Ascending aorta (tissue), 2 donors: ENCODE measurements at regions of chr12 and their contacts with region 1.

Region 1: DNA sequence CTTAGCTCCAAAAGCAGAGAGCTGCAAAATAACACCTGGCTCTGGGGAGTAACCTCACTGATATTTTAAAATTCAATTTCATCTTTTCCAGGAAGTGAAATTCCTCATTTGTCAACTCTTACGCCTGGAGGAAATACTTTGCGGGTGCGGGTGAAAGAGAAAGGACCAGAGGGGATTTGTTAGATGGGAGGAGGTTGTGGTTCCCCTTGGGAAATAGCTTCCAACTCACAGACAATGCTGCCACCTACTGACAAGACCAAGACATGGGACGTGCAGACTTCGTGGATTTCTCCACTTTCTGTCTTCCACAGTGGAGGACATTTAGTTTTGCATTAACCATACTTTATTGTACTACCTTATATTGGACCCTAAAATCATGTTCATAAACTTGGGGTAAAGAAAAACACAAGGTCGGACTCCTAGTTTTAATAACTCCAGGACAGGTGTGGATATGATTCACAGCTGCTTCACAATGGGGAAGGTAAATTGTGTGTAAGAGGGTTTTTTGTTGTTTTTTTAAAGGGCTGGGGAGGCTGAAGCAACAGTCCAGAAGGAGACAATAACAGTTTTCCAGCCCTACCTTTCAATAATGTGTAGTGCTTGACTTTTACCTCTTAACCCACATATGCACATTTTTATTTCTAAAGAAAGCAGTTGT is 10.8 kb downstream of the FBXL14 start:
- DNase-seq: peak in 1 of 2 donors; percentile 82
- H3K4me3 ChIP-seq: peak overlapping the region in 1 of 2 donors; percentile 53
- H3K27ac ChIP-seq: no peak overlapping the region
- H3K4me1 ChIP-seq: peaks cover 0 to 7% of the 10 kb centered on the region in 2 donors
- H3K27me3 ChIP-seq: no peaks in the 10 kb centered on the region
- CTCF ChIP-seq: peak; percentile 88 to 91 (median 88)

Region 2: DNA sequence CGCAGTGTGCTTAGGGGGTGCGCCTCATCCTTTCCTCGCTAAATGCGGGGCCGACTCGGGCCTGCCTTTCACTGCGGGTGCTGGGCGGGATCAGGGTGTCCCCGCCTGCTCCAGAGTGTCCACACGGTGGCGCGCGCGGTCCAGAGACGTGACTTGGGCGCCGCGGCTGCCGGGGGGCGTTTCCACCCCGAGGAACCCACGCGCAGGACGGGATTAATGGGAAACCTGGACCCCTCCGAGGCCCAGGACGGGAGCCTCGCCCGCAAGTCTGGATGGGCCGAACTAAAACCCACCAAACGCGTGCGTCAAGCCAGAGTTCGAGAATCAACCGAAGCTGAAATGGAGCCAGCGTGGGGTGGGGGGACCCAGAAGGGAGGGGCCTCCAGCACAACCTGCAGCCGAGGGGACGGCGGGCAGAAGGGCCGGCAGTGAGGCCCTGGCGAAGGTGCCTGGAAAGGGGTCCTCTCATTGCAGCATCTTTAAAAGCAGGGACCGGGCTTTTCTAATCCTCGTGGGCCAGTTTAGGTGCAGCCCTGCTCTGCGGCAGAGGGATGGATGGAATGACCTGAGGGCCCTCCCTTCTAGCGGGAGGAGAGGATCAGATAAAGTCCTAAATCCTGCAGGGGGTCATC is 1013.6 kb before region 1 on chr12:
- intact Hi-C with region 1: loop called (anchors 10 kb)
- DNase-seq: peak in 1 of 2 donors; percentile 95
- H3K4me3 ChIP-seq: peak overlapping the region; percentile 68 to 77
- H3K27ac ChIP-seq: peak overlapping the region; percentile 93 to 97
- H3K4me1 ChIP-seq: peaks cover 7 to 21% of the 10 kb centered on the region in 2 donors
- H3K27me3 ChIP-seq: no peaks in the 10 kb centered on the region
- CTCF ChIP-seq: peak; percentile 94 to 95 (median 94)

Region 3: DNA sequence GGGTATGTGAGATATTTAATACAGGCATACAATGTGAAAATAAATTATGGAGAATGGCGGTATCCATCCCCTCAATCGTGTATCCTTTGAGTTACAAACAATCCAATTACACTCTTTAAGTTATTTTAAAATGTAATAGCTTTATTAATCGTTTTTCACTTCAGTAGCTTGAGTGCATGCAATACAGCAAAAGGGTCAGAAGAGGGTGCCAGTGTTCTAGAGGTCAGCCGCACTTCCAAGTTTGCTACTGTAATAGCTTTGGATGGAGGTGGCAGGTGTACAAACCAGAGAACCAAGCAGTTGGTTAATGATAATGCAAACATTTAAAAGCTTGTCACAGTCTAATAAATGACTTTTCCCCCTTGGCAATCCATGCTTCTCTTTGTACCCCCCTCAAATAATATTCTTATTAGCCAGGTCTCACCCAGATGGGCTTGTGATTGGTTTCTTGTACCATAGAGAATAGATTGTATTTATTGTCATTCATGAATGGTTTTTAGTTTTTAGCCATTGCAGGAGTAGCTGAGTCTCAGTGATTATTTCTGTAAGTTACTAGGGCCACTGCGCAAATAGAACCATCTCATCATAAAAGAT is 465.5 kb before region 1 on chr12:
- intact Hi-C with region 1: loop called (anchors 1 kb)
- DNase-seq: peak in 1 of 2 donors; percentile 79
- H3K4me3 ChIP-seq: no peak overlapping the region
- H3K27ac ChIP-seq: no peak overlapping the region
- H3K4me1 ChIP-seq: no peaks in the 10 kb centered on the region
- H3K27me3 ChIP-seq: no peaks in the 10 kb centered on the region
- CTCF ChIP-seq: peak; percentile 82 to 93 (median 91)

Region 4: GRCh38 chr12:2118061-2118460 is 534.5 kb after region 1 on chr12:
- intact Hi-C with region 1: no loop called
- DNase-seq: no peak
- H3K4me3 ChIP-seq: no peak overlapping the region
- H3K27ac ChIP-seq: peak overlapping the region; percentile 76 to 81
- H3K4me1 ChIP-seq: peaks cover 16 to 51% of the 10 kb centered on the region in 2 donors
- H3K27me3 ChIP-seq: no peaks in the 10 kb centered on the region
- CTCF ChIP-seq: no peak